AG04450 (cell line): ENCODE measurements at regions of chr3 and their contacts with region 1.

Region 1: DNA sequence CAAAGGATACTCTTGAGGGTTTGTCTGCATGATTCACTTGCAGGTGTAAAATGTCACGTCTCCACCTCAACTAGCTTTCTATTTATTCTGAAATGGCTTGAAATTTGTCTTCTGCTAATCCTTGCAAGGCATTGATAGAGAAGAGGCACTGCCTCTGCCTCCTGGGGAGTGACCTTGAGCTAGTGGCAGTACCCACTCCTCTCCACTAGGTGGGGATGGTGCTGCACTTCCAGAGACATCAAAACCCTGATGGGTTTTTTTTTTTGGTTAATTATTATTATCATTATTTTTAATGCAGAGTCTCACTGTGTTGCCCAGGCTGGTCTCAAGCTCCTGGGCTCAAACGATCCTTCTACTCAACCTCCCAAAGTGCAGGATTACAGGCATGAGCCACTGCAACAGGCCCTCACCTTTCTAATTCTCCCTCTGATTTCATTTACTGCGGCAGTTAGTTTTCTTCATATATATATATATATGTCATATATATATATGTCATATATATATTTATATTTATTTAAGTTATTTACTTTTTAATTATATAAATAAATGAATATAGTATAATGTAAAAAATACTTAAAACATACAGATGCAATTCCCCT is 117.6 kb upstream of the EIF1B start:
- DNase-seq: peak; percentile 10
- H3K4me3 ChIP-seq: no peak overlapping the region
- H3K27ac ChIP-seq: no peak overlapping the region
- H3K27me3 ChIP-seq: no peaks in the 10 kb centered on the region
- CTCF ChIP-seq: peak; percentile 95

Region 2: DNA sequence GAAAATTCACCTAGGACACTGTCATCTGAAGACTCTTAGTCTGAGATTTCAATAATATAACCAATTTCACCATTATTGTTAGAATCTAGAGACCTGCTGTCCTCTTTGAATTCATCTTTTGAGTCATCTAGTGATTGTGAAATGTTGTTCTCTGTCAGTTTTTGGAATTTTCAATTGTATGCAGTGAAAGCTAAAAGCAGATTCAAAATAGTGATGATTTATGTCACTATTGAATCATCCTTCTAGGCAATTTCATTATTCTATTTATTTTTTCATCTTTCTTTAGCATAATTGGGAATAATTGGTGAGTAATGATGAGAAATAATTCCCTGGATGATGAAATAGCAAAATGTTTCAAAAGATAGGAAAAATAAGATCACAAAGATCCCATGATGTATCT is 15.8 kb after region 1 on chr3:
- CTCF ChIA-PET with region 1: interaction called, 18 read pairs
- POLR2A ChIA-PET with region 1: no interaction called
- DNase-seq: no peak
- H3K4me3 ChIP-seq: no peak overlapping the region
- H3K27ac ChIP-seq: no peak overlapping the region
- H3K27me3 ChIP-seq: no peaks in the 10 kb centered on the region
- CTCF ChIP-seq: no peak

Region 3: DNA sequence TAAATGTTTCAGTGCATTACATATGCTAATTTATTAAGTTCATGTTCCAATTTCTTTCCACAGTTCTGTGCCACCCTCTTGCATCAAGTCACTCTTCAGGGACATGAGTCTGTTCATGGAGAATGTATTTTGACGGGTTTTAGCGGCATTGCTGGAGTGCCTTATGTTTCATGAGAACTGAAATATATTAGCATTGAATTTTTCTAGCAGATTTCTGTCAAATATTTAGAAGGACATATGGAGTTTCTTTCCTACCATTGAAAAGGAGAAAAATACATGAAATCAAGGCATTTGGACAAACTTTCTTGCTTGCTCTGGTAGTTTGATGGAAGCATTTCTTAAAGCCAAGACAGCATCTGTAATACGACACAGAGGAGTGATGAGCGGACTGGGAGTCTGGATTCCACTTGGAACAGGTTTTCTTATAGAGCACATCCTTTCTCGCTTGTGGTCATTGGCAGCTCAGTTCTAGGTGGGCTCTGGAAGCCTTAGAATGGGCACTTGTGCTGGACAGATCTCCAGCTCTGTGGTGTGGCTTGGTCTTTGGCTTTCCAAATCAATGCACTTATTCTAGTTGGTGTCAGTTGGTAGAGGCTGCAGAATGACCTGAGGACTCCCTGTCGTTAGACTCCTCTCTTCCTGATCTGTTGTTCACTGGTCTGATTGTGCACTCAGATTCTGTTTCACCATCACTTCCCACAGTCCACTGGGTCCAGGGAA is 33.0 kb after region 1 on chr3:
- CTCF ChIA-PET with region 1: no interaction called
- POLR2A ChIA-PET with region 1: no interaction called
- DNase-seq: no peak
- H3K4me3 ChIP-seq: no peak overlapping the region
- H3K27ac ChIP-seq: no peak overlapping the region
- H3K27me3 ChIP-seq: no peaks in the 10 kb centered on the region
- CTCF ChIP-seq: no peak

Region 4: GRCh38 chr3:40299721-40300335 is 107.9 kb after region 1 on chr3:
- CTCF ChIA-PET with region 1: interaction called, 10 read pairs
- POLR2A ChIA-PET with region 1: no interaction called
- DNase-seq: peak; percentile 45
- H3K4me3 ChIP-seq: no peak overlapping the region
- H3K27ac ChIP-seq: no peak overlapping the region
- H3K27me3 ChIP-seq: no peaks in the 10 kb centered on the region
- CTCF ChIP-seq: no peak

Region 5: GRCh38 chr3:40317061-40317855 is 125.3 kb after region 1 on chr3:
- CTCF ChIA-PET with region 1: interaction called, 333 read pairs
- POLR2A ChIA-PET with region 1: no interaction called
- DNase-seq: peak; percentile 37
- H3K4me3 ChIP-seq: no peak overlapping the region
- H3K27ac ChIP-seq: no peak overlapping the region
- H3K27me3 ChIP-seq: peaks cover 5% of the 10 kb centered on the region
- CTCF ChIP-seq: peak; percentile 89

Region 6: DNA sequence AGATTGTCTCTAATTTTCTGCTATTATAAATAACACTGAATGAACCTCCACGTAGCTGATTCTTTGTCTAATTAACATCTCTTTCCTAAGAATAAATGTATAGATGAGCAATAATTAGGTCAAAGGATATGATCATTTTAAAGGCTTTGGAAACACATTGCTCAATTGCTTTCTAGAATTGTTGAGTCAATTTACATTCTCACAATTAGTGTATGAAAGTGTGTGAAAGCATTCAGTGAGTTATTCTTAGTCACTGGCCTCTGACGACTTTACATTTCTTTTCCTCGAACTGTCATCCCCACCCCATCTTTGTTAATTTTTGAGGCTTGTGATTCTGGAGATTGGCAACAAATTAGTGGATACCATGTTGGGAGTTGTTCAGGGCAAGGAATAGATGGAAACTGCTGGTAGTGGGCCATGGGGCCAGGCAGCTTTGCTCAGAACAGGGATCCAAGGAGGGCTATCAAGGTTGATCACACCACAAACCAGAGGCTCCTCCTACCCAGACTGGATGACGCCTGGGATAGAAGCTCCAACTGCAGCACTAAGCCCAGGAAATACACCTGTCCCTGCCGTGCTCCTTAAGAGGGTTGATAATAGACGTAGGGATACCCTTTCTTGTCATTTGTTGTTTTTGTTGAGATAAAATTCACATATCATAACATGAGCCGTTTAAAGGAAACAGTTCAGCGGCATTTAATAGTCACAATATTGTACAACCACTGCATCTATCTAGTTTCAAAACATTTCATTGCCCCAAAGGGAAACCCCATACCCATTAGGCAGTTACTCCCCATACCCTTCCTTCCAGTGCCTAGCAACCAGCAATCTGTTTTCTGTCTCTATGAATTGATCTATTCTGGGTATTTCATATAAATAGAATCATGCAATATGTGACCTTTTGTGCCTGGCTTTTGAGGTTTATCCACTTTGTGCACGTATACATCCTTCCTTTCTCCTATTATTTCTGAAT is 145.5 kb after region 1 on chr3:
- CTCF ChIA-PET with region 1: no interaction called
- POLR2A ChIA-PET with region 1: no interaction called
- DNase-seq: no peak
- H3K4me3 ChIP-seq: no peak overlapping the region
- H3K27ac ChIP-seq: no peak overlapping the region
- H3K27me3 ChIP-seq: no peaks in the 10 kb centered on the region
- CTCF ChIP-seq: no peak

Region 7: DNA sequence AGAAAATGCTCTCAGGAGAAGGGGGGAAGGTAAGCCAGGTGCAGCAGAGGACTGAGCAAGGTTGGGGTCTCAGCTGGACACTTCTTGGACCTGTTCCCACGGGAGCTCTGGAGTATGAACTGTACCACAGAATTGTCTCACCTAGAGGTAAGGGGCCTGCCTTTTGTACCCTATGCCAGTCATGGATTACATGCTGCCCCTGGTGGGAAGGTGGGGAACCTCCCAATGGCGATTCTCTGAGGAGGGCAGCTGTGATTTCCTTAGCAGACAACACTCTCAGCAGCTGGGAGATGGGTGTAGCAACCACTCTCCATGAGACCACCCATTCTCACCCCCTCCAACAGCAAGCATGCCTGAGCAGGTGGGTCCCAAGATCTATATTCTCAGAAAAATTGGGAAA is 678.0 kb after region 1 on chr3:
- CTCF ChIA-PET with region 1: no interaction called
- POLR2A ChIA-PET with region 1: no interaction called
- DNase-seq: no peak
- H3K4me3 ChIP-seq: no peak overlapping the region
- H3K27ac ChIP-seq: no peak overlapping the region
- H3K27me3 ChIP-seq: no peaks in the 10 kb centered on the region
- CTCF ChIP-seq: no peak